CD8-positive, alpha-beta T cell (primary cell): ENCODE measurements at regions of chr9 and their contacts with region 1.

Region 1: GRCh38 chr9:91963711-91964240 is 13.7 kb upstream of the ROR2 start:
- DNase-seq: no peak
- ATAC-seq: no peak
- H3K4me3 ChIP-seq: no peak overlapping the region
- H3K4me3 Mint-ChIP-seq: no peak overlapping the region
- H3K27ac ChIP-seq: no peak overlapping the region
- H3K27ac Mint-ChIP-seq: no peak overlapping the region
- H3K4me1 ChIP-seq: no peaks in the 10 kb centered on the region
- H3K4me1 Mint-ChIP-seq: no peaks in the 10 kb centered on the region
- H3K27me3 ChIP-seq: no peaks in the 10 kb centered on the region
- H3K27me3 Mint-ChIP-seq: peaks cover 24% of the 10 kb centered on the region
- CTCF ChIP-seq: no peak

Region 2: GRCh38 chr9:91949946-91950664 is 13.7 kb before region 1 on chr9 and contains the start of gene ROR2:
- CTCF ChIA-PET with region 1: interaction called, 11 read pairs
- POLR2A ChIA-PET with region 1: interaction called, 3 read pairs
- intact Hi-C with region 1: no loop called
- DNase-seq: peak in 8 of 9 experiments; percentile 6 to 64 (median 36)
- ATAC-seq: peak; percentile 58
- H3K4me3 ChIP-seq: peak within 1 kb of the TSS in 1 of 2 experiments; percentile 26
- H3K4me3 Mint-ChIP-seq: peak within 1 kb of the TSS; percentile 66
- H3K27ac ChIP-seq: no peak within 1 kb of the TSS
- H3K27ac Mint-ChIP-seq: no peak within 1 kb of the TSS
- H3K4me1 ChIP-seq: no peaks in the 10 kb centered on the region
- H3K4me1 Mint-ChIP-seq: peaks cover 8% of the 10 kb centered on the region
- H3K27me3 ChIP-seq: peaks cover 16 to 18% of the 10 kb centered on the region in 2 experiments
- H3K27me3 Mint-ChIP-seq: peaks cover 54% of the 10 kb centered on the region
- CTCF ChIP-seq: no peak
- total RNA-seq, gene ROR2: 0.19 to 0.43 TPM